ENCODE measurements at regions of chr14 and their contacts with region 1.

Region 1: GRCh38 chr14:59483900-59484638 is at the starts of genes JKAMP and L3HYPDH:
- DNase-seq: peak; percentile 78
- ATAC-seq: peak; percentile 88
- H3K4me3 ChIP-seq: peak within 1 kb of the TSS; percentile 83
- H3K27ac ChIP-seq: peak within 1 kb of the TSS; percentile 85
- H3K4me1 ChIP-seq: peaks cover 10% of the 10 kb centered on the region; the same call in 1 of the 2 replicates
- H3K27me3 ChIP-seq: no peaks in the 10 kb centered on the region
- CTCF ChIP-seq: peak; percentile 44 to 58 (median 57); a peak in 4 of 6 replicates
- EP300 ChIP-seq: 0 out of 4 replicates have a peak, but pooled peaks of 1 of the 2 experiments have one; percentile 7
- POLR2A ChIP-seq: peak; percentile 95
- RAD21 ChIP-seq: no peak
- polyA plus RNA-seq, gene JKAMP: 66.3 to 129 TPM
- polyA plus RNA-seq, gene L3HYPDH: 13.5 to 19.5 TPM

Region 2: DNA sequence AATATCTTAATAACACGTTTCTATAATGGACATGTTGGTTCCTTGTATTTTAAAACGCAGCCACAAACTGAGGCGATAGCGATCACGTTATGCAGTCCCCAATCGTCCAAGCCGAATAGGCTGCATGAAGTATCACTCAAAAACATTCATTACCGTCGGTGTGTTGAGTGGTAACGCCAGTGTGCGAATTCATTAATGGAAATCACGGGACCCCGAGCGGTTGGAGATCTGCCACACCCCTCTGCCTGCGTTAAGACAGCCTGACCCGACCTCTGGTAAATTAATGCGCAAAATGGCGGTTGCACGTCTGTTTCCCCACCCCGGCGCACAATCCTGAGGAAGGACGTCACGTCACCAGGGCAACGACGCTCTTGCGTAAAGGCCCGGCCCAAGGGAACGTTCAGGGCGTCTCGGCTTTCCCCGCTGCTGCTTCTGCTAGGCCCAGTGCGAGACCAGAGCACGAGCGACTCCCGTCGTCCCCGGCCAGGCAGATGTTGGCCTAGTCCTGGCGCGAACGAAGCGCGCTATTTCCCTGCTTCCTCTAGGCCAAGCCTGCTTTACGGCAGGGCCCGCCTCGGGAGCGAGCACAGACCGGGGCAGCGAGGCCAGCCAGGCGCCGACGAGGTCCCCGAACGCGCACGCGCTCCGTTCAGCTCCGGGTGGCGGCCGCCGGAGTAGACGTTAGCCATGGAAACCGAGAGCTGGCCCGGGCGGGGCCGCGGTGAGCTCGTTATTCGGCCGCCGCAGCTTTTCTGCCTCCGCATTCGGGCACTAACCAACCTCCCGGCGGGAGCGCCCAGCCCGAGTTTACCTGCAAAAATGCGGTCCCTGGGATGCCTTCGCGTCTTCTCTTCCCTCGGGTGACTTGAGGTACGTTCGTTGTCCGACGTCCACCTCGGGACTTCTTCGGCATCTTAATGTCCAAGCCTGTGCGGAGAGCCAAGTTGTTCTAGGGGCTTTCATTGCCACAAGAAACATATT is 607.8 kb after region 1 on chr14 and contains the start of gene PCNX4:
- CTCF ChIA-PET with region 1: no interaction called
- POLR2A ChIA-PET with region 1: no interaction called
- RAD21 ChIA-PET with region 1: no interaction called
- SMC1A ChIA-PET with region 1: no interaction called
- in situ Hi-C with region 1: no loop called
- intact Hi-C with region 1: loop called (anchors 10 kb)
- DNase-seq: peak; percentile 96
- ATAC-seq: peak; percentile 89
- H3K4me3 ChIP-seq: peak within 1 kb of the TSS; percentile 74
- H3K27ac ChIP-seq: peak within 1 kb of the TSS; percentile 95
- H3K4me1 ChIP-seq: peaks cover 11% of the 10 kb centered on the region
- H3K27me3 ChIP-seq: no peaks in the 10 kb centered on the region
- CTCF ChIP-seq: 0 out of 6 replicates have a peak, but pooled peaks of 1 of the 3 experiments have one; percentile 2
- EP300 ChIP-seq: peak; percentile 39 to 50; a peak in 3 of 4 replicates
- POLR2A ChIP-seq: peak; percentile 97
- RAD21 ChIP-seq: no peak
- polyA plus RNA-seq, gene PCNX4: 13.8 to 15.7 TPM

Region 3: GRCh38 chr14:60195179-60195810 is 711.2 kb after region 1 on chr14:
- CTCF ChIA-PET with region 1: no interaction called
- POLR2A ChIA-PET with region 1: no interaction called
- RAD21 ChIA-PET with region 1: no interaction called
- SMC1A ChIA-PET with region 1: no interaction called
- in situ Hi-C with region 1: no loop called
- intact Hi-C with region 1: no loop called
- DNase-seq: no peak
- ATAC-seq: peak; percentile 88
- H3K4me3 ChIP-seq: no peak overlapping the region
- H3K27ac ChIP-seq: no peak overlapping the region
- H3K4me1 ChIP-seq: peaks cover 10% of the 10 kb centered on the region
- H3K27me3 ChIP-seq: no peaks in the 10 kb centered on the region
- CTCF ChIP-seq: peak; percentile 50 to 70 (median 59); a peak in 5 of 6 replicates
- EP300 ChIP-seq: no peak
- POLR2A ChIP-seq: no peak
- RAD21 ChIP-seq: peak; percentile 91